Posterior vena cava (tissue), 2 donors: ENCODE measurements at regions of chr2 and their contacts with region 1.

Region 1: DNA sequence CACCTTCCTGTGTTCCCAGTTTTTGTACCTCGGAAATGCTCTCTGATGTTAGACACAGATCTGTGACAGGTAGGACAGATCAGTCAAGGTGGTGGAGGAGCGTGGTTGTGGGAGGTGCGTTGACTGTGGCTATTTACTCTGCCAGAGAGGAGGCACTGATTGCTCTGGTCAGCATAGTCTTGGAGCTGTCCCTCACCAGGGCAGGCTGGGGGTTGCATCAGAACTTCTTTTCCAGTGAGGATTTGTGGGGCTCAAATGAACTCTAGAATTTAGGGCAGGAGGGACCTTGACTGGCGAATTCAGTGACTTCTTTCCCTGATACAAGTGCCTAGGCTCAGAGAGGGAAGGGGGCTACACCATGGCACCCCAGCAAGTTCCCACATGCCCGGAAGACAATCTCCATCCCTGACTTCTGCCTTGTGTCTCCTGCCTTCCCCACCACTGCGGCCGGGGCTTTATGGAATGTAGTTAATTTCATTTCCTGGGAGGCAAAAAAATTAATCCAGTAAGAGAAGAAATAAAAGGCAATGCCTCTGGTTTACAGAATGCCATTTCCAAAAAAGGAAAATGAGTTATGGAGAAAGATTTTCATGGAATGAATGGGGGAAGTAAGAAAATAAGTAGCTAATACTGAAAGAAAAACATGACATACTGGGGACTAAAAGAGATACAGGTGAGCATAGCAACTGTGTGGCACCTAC is 26.1 kb downstream of the NIFK start:
- DNase-seq: peak; percentile 38

Region 2: GRCh38 chr2:121649596-121650314 is 60.9 kb before region 1 on chr2:
- intact Hi-C with region 1: loop called in 1 of 2 experiments (anchors 10 kb)
- DNase-seq: peak; percentile 99